Activated CD4-positive, alpha-beta T cell treated with anti-CD3 and anti-CD28 coated beads for 36 hours (primary cell): ENCODE measurements at regions of chr11 and their contacts with region 1.

Region 1: DNA sequence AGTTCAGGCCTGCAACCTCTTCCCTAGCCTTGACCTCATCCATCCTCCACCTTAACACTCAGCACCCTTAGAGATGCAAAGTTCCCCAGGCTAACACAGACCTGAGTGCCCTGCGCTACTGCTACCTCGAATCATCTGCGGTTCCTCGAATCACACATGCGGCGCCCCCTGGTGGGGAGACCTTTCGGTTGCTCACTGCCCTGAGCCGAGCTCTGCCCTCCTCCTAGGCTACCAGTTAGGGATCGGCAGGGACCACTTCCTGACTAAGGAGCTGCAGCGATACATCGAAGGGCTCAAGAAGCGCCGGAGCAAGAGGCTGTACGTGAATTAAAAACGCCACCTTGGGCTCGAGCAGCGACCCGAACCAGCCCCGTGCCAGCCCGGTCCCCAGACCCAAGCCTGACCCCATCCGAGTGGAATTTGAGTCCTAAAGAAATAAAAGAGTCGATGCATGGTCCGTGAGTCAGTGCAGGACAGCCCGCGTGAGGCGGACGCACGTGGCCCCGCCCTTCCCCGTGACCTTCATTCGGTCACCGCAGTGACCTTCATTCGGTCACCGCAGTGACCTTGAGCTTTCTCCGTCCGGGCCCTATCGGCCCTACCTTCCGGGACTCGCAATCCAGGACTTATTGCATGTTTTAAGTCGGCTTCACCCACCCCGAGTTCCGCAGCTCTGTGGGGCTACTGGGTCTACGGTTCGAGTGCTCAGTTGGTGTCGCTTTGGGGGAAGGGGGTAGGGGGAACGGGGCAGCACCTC is 830 bp upstream of the ESRRA start:
- DNase-seq: peak; percentile 99
- ATAC-seq: peak; percentile 49
- H3K4me3 Mint-ChIP-seq: peak overlapping the region; percentile 100
- H3K27ac Mint-ChIP-seq: peak overlapping the region; percentile 95
- H3K4me1 Mint-ChIP-seq: peaks cover 34% of the 10 kb centered on the region
- H3K27me3 Mint-ChIP-seq: peaks cover 14% of the 10 kb centered on the region

Region 2: DNA sequence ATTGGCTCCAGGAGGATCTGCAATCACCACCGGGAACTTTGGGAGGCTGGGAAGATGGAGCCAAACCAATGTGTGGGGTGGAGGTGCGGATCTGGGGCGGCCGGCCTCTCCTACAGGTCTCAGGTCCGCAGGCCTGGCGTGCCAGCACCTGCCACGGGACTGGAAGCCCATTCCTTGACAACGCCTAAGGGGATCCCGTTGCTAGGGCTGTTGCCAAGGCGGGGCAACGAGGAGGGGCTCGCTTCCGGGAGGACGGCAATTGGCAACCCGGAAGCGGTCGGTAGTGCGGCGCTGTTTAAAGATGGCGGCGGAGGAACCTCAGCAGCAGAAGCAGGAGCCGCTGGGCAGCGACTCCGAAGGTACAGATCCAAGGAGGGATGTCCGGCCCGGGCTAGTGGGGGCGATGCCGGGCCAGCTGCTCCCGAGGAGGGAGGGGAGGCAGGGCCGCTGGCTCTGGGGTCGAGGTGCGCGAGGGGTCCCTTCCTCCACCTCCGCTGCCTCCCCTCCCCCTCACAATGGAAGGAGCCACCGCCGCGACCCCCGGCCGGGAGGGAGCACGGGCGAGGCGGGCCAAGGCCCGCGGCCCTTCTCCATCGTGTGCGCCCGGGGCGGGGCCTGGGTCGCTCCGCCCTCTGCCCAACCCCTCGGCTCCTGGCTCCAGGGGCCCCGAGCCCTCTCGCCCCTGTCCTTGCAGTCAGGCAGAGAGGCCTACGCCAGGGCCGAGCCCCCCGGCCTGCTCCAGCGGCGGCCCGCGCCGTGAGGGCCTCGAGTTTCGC is 318.1 kb before region 1 on chr11 and contains the start of gene OTUB1:
- CTCF ChIA-PET with region 1: no interaction called
- POLR2A ChIA-PET with region 1: no interaction called
- intact Hi-C with region 1: loop called in 1 of 2 experiments (anchors 10 kb)
- DNase-seq: peak; percentile 94
- ATAC-seq: peak; percentile 92
- H3K4me3 Mint-ChIP-seq: peak within 1 kb of the TSS; percentile 93
- H3K27ac Mint-ChIP-seq: peak within 1 kb of the TSS; percentile 89
- H3K4me1 Mint-ChIP-seq: peaks cover 23% of the 10 kb centered on the region
- H3K27me3 Mint-ChIP-seq: no peaks in the 10 kb centered on the region
- total RNA-seq, gene OTUB1: 77.4 to 86.1 TPM

Region 3: GRCh38 chr11:64204464-64204989 is 100.0 kb before region 1 on chr11:
- CTCF ChIA-PET with region 1: interaction called, 111 read pairs
- POLR2A ChIA-PET with region 1: interaction called, 10 read pairs
- intact Hi-C with region 1: loop called (anchors 1 kb)
- DNase-seq: peak; percentile 90
- ATAC-seq: peak; percentile 30
- H3K4me3 Mint-ChIP-seq: peak overlapping the region; percentile 33
- H3K27ac Mint-ChIP-seq: peak overlapping the region; percentile 79
- H3K4me1 Mint-ChIP-seq: peaks cover 41% of the 10 kb centered on the region
- H3K27me3 Mint-ChIP-seq: no peaks in the 10 kb centered on the region

Region 4: GRCh38 chr11:64246871-64247728 is 57.4 kb before region 1 on chr11 and contains the start of gene PPP1R14B:
- CTCF ChIA-PET with region 1: interaction called, 16 read pairs
- POLR2A ChIA-PET with region 1: no interaction called
- intact Hi-C with region 1: loop called (anchors 1 kb)
- DNase-seq: peak; percentile 89
- ATAC-seq: peak; percentile 54
- H3K4me3 Mint-ChIP-seq: peak within 1 kb of the TSS; percentile 94
- H3K27ac Mint-ChIP-seq: peak within 1 kb of the TSS; percentile 92
- H3K4me1 Mint-ChIP-seq: peaks cover 34% of the 10 kb centered on the region
- H3K27me3 Mint-ChIP-seq: no peaks in the 10 kb centered on the region
- total RNA-seq, gene PPP1R14B: 261 to 267 TPM

Region 5: DNA sequence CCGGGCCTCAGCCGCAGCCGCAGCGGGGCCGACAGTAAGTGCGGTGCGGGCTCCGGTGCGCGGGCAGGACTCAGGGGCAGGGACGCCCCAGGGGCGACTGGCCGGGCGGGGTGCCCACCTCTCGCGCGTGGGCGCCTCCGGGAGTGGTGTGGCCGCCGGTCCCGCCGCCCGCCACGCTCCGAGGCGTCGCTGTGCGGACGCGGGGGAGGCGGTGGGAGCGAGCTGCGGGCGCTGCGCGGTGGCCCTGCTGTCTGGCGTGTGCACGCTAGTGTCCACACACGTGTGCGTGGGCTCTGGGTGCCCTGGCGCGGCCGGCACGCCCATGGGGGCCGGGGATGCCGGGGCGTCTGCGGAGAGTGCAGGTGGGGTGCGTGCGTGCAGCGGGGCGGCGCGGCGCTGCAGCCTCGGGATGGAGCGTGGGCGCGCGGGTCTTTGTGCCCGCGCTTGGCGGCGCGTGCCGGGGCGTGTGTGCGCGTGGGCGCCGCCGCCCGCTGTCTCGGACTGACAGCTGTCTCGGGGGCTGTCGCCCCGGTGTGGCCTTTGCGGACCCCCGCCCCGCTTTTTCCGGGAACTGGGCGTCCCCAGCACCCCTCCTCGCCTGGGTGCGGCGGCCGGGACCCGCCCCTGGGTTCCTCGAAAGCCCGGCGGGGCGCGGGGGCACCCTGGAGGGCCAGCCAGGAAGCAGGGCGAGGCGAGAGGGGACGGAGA is 12.6 kb before region 1 on chr11:
- CTCF ChIA-PET with region 1: interaction called, 13 read pairs
- POLR2A ChIA-PET with region 1: no interaction called
- intact Hi-C with region 1: no loop called
- DNase-seq: no peak
- ATAC-seq: no peak
- H3K4me3 Mint-ChIP-seq: no peak overlapping the region
- H3K27ac Mint-ChIP-seq: no peak overlapping the region
- H3K4me1 Mint-ChIP-seq: peaks cover 3% of the 10 kb centered on the region
- H3K27me3 Mint-ChIP-seq: peaks cover 42% of the 10 kb centered on the region

Region 6: GRCh38 chr11:64358907-64359711 is 54.6 kb after region 1 on chr11 and contains the start of gene RPS6KA4:
- CTCF ChIA-PET with region 1: interaction called, 8 read pairs
- POLR2A ChIA-PET with region 1: no interaction called
- intact Hi-C with region 1: loop called in 1 of 2 experiments (anchors 1 kb)
- DNase-seq: peak; percentile 80
- ATAC-seq: peak; percentile 69
- H3K4me3 Mint-ChIP-seq: peak within 1 kb of the TSS; percentile 85
- H3K27ac Mint-ChIP-seq: peak within 1 kb of the TSS; percentile 56
- H3K4me1 Mint-ChIP-seq: peaks cover 36% of the 10 kb centered on the region
- H3K27me3 Mint-ChIP-seq: no peaks in the 10 kb centered on the region
- total RNA-seq, gene RPS6KA4: 22.0 to 30.2 TPM